Esophagus squamous epithelium (tissue), 5 donors: ENCODE measurements at regions of chr1 and their contacts with region 1.

Region 1: GRCh38 chr1:44835738-44836675 is 7.0 kb downstream of the PTCH2 start:
- DNase-seq: no peak
- H3K4me3 ChIP-seq: peak overlapping the region in 1 of 4 donors; percentile 24
- H3K27ac ChIP-seq: no peak overlapping the region
- H3K4me1 ChIP-seq: peaks cover 0 to 8% (median 0%) of the 10 kb centered on the region in 3 donors
- H3K27me3 ChIP-seq: no peaks in the 10 kb centered on the region
- CTCF ChIP-seq: peak; percentile 62 to 87 (median 76)
- POLR2A ChIP-seq: no peak

Region 2: DNA sequence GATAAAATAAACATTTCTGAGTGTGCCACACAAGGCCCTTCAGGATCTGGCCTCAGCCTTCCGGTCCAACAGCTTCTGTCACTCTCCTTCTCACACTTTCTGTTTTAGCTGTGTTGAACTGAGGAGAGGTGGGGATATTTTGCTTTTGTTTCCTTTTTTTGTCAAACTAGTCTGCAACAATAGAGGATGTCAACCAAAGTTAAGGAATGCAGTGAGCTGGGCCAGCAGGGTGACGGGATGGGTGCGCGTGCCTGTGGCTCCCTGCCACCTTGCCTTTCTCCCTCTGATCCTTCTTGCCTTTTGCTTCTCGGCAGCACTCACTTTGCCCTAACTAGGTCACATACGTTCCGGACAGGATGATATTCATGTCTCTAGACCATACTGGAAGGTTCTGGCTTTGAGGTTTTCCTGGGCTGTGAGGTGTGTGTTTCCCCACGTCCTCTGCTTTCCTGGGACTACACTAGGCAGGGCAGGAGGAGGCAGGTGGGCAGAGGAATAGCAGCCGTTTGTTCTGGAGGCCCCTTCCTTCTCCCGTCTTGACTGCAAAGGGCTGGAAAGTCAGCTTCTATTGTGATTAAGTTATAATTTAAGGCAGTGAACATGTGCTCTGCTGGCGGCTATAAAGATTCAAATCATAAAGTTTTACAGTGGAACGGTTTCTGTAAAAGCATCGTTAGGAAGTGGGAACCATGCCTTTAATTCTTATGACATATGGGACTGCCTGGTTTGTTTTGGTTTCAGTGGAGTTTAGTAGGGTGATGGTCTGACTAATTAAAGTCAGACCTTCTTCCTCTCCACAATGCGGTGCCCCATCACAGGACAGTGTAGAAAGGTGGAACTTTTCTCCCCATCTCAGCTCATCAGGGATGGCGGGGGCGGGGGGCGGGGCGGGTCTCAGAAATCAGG is 363.1 kb before region 1 on chr1:
- intact Hi-C with region 1: no loop called
- DNase-seq: no peak
- H3K4me3 ChIP-seq: peak overlapping the region in 1 of 4 donors; percentile 34
- H3K27ac ChIP-seq: no peak overlapping the region
- H3K4me1 ChIP-seq: peaks cover 0 to 12% (median 0%) of the 10 kb centered on the region in 3 donors
- H3K27me3 ChIP-seq: peaks cover 0 to 10% (median 0%) of the 10 kb centered on the region in 4 donors
- CTCF ChIP-seq: no peak
- POLR2A ChIP-seq: no peak

Region 3: DNA sequence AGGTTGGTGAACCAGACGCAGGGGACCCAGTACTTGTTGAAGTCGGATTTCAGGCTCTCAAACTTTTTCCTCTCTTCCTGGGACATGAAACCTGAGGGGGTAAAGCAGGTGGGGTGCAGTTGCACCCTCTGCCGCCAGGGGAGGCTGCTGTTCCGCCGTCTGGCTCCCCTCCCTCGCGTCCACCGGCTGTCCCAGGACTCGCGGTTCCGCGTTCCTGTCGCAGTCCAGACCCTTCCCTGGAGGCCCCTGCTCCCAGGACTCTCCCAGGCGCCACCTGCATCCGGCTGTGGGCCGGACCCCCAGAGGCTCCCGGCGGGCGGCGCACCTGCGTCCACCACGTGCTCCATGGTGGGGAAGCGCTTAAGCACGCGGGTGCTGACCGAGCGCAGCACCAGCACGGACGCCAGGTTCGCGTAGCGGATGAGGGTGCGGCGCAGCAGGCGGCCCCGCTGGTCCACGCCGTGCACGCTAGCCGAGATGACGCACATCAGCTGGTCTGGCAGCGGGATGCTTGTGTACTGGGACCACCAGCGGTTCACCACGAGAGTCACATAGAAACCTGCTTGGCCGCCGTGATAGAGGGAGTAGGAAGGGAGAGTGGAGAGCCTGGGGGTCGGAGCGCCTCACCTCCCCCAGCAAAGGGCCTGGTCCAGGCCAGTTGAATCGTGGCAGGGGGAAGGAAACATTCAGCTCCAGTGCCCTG is 49.7 kb before region 1 on chr1:
- intact Hi-C with region 1: loop called (anchors 10 kb)
- DNase-seq: no peak
- H3K4me3 ChIP-seq: peak overlapping the region; percentile 34 to 63 (median 54)
- H3K27ac ChIP-seq: peak overlapping the region in 3 of 4 donors; percentile 24 to 81 (median 77)
- H3K4me1 ChIP-seq: peaks cover 20 to 45% (median 27%) of the 10 kb centered on the region in 3 donors
- H3K27me3 ChIP-seq: no peaks in the 10 kb centered on the region
- CTCF ChIP-seq: peak; percentile 98 to 100 (median 100)
- POLR2A ChIP-seq: no peak

Region 4: DNA sequence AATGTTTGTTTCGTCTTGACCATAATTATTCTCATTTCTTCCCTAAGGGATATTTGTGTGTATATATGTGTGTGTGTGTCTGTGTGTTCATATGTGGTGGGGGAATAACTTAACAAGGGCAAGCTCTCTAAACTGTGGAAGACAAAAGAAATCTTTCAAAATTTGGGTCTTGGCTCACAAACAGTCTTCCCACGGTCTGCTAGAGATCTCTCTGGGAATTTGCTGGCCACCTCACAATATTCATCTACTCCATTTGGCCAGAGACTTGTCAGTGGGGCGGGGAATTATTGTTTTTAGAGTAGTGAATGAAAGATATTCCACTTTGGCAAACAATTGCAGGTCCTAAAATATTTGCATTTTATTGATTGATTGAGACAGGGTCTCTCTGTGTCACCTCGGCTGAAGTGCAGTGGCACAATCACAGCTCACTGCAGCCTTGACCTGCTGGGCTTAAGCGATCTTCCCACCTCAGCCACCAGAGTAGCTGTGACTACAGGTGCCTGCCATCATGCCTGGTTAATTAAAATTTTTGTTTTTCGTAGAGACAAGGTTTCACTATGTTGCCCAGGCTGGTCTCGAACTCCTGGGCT is 158.4 kb after region 1 on chr1:
- intact Hi-C with region 1: no loop called
- DNase-seq: no peak
- H3K4me3 ChIP-seq: no peak overlapping the region
- H3K27ac ChIP-seq: no peak overlapping the region
- H3K4me1 ChIP-seq: no peaks in the 10 kb centered on the region
- H3K27me3 ChIP-seq: no peaks in the 10 kb centered on the region
- CTCF ChIP-seq: no peak
- POLR2A ChIP-seq: no peak